Cardiac septum (tissue), 1 donor: ENCODE measurements at regions of chr9 and their contacts with region 1.

Region 1: GRCh38 chr9:129610473-129611301 is 10.2 kb downstream of the C9orf50 start:
- DNase-seq: peak; percentile 92

Region 2: DNA sequence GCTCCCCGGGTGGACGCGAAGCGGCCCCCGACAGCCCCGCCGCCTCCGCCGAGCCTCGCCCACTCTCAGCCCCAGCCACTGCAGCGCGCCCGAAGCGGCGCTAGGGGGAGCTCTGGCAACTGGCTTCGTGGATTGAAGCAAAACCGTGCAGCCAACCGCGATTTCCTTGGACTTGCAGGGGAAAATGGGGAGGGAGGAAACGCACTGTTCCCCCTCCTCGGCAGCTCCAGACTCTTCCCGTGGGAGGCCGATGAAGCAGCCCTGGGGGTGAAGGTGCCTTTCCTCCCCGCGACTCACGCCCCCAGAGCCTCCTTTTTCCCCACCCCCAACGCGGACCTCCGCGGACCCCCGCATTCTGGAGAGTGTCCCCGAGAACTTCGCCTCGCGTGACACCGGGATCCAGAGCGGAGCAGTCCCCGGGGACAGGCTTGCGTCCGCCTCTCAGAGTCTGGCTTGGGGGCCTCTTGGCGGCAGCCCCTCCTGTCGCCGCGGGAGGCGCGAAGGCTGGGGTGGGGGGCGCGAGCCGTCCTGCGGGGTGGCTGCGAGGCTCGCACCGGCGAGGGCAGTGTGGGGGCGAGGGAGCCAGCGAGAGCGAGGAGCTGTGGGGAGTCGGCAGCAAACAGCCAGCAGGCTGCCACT is 436.5 kb before region 1 on chr9:
- intact Hi-C with region 1: loop called (anchors 1 kb)
- DNase-seq: peak; percentile 95

Region 3: GRCh38 chr9:129258124-129258822 is 352.4 kb before region 1 on chr9:
- intact Hi-C with region 1: loop called (anchors 5 kb)
- DNase-seq: peak; percentile 94

Region 4: DNA sequence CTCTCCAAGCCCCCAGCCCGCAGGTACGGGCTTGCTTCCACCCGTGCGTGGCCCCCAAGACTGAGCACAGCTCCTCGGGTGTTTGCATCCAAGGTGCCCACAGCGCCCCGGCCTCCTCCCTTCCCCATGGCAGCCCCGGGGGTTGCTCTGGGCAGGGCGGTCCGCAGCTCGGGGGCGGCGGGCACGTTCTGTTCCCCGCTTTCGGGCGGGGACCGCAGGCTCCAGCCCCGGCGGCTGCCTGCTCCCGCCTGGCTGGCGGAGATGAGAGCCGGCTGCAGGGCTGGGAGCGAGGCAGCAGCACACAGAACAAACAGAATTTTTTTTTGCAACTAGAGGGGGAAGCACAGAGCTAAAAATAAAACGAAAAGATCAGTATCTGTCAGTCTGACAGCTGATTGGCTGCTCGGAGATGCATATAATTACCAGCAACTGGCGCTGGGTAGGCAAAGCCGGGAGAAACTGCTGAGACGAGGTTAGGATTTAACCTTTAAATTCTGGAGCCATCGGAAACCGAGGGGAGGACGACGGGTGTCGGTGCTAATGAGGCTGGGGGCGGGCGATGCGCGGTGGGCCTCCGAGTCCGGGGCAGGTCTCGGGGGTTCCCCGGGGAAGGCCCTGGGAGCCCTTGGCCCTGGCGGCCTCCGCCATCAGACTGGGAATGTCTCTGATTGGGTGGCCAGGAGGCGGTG is 290.0 kb before region 1 on chr9:
- intact Hi-C with region 1: loop called (anchors 5 kb)
- DNase-seq: peak; percentile 85

Region 5: DNA sequence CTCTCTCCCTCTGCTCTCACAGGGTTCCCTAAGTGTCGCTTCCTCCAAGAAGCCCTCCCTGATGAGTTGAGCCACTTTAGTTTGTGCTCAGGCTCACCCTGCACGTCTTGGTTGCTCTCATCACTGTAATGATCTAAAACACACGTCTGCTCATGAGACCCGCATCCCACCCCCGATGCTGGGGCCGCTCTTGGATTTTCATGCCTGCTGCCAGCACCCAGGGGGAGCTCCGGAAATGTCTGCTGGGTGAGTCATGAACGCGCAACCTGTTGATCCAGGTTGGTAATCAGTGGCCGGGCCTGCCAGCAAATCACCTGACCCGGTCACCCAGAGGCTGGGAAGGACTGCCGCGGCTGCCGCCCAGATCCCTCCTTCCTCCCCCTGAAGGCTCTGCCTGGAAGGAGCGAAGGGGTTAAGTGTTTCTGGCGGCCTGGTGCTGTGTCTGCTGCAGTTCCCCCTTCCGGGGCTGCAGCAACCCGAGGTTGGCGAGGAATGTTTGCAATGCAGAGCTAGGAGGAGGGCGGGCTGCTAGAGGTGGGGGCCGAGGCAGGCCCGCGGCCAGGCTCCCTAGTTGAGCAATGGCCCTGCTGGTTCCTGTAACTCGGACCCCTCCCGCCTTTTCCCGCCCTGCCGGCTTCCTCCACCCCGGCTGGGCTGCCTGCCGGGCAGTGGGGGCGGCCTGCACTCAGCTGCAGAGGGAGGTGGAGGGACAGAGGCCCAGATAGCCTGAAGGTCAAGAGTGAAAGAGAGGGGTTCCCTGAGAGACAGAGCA is 276.5 kb before region 1 on chr9:
- intact Hi-C with region 1: loop called (anchors 5 kb)
- DNase-seq: peak; percentile 96

Region 6: GRCh38 chr9:129487642-129488409 is 122.9 kb before region 1 on chr9:
- intact Hi-C with region 1: loop called (anchors 2 kb)
- DNase-seq: no peak